ENCODE measurements at regions of chr15 and their contacts with region 1.

Region 1: DNA sequence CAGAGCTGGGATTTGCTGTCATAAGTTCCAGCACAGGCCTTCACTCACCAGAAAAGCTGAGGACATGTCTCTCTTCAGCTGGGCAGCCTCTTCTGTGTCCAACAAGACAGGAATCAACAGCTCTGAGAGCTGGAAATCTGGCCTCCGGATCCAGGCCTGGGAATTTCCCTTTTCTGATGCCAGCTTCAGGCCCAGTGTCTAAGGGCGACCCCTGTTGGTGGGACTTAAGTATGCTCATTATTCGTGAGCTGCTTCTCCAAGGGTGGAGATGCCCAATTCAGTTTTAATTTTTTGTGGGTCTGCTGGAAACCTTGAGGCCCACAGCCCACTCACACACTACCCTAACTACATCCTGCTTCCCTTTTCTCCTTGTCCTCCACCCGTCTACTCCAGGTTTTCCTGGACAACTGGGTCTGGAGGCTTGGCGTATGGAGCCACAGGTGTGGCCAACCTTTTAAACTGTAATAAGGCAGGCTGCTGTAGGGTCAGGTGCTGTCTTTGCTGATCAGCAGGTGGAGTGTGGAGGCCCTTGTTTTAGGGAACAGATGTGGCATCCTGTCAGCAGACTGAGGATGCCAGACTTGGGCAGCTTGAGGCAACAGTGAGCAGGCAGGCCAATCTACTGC is 2.6 kb upstream of the CEMIP start:
- DNase-seq: peak; percentile 81
- H3K4me3 ChIP-seq: no peak overlapping the region
- H3K27ac ChIP-seq: no peak overlapping the region
- H3K4me1 ChIP-seq: peaks cover 18% of the 10 kb centered on the region
- H3K27me3 ChIP-seq: peaks cover 13 to 17% of the 10 kb centered on the region in 2 experiments
- CTCF ChIP-seq: peak; percentile 88
- POLR2A ChIP-seq: no peak

Region 2: GRCh38 chr15:80475572-80475971 is 301.0 kb before region 1 on chr15:
- CTCF ChIA-PET with region 1: interaction called, 14 read pairs
- POLR2A ChIA-PET with region 1: no interaction called
- dilution Hi-C with region 1: no loop called
- intact Hi-C with region 1: no loop called
- DNase-seq: no peak
- H3K4me3 ChIP-seq: no peak overlapping the region
- H3K27ac ChIP-seq: no peak overlapping the region
- H3K4me1 ChIP-seq: no peaks in the 10 kb centered on the region
- H3K27me3 ChIP-seq: no peaks in the 10 kb centered on the region
- CTCF ChIP-seq: peak in 1 of 2 donors; percentile 1
- POLR2A ChIP-seq: no peak

Region 3: GRCh38 chr15:80507712-80508316 is 268.7 kb before region 1 on chr15:
- CTCF ChIA-PET with region 1: no interaction called
- POLR2A ChIA-PET with region 1: no interaction called
- dilution Hi-C with region 1: no loop called
- intact Hi-C with region 1: no loop called
- DNase-seq: no peak
- H3K4me3 ChIP-seq: no peak overlapping the region
- H3K27ac ChIP-seq: no peak overlapping the region
- H3K4me1 ChIP-seq: no peaks in the 10 kb centered on the region
- H3K27me3 ChIP-seq: no peaks in the 10 kb centered on the region
- CTCF ChIP-seq: no peak
- POLR2A ChIP-seq: no peak

Region 4: GRCh38 chr15:80580106-80580505 is 196.4 kb before region 1 on chr15:
- CTCF ChIA-PET with region 1: interaction called, 13 read pairs
- POLR2A ChIA-PET with region 1: no interaction called
- dilution Hi-C with region 1: no loop called
- intact Hi-C with region 1: loop called (anchors 5 kb)
- DNase-seq: no peak
- H3K4me3 ChIP-seq: no peak overlapping the region
- H3K27ac ChIP-seq: no peak overlapping the region
- H3K4me1 ChIP-seq: no peaks in the 10 kb centered on the region
- H3K27me3 ChIP-seq: no peaks in the 10 kb centered on the region
- CTCF ChIP-seq: no peak
- POLR2A ChIP-seq: no peak

Region 5: DNA sequence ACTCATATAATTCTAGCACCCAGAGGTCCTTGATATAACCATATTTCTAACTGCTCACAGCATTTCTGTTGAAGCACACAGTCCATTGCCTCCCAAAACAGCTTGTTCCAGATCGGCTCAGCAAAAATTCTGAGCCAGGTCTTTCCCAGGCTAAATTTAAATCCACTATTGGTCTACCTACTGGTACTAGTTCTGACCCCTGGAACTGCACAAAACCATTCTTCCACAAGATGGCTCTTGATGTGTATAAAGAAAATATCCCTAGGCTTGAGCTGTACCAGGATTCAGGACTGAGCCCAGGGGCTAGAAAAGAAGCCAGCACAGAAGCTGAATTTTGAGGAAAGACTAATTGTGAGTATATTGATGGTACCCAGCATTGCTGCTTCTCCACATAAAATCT is 156.9 kb before region 1 on chr15:
- CTCF ChIA-PET with region 1: interaction called, 56 read pairs
- POLR2A ChIA-PET with region 1: no interaction called
- dilution Hi-C with region 1: no loop called
- intact Hi-C with region 1: loop called (anchors 1 kb)
- DNase-seq: no peak
- H3K4me3 ChIP-seq: no peak overlapping the region
- H3K27ac ChIP-seq: no peak overlapping the region
- H3K4me1 ChIP-seq: peaks cover 19% of the 10 kb centered on the region
- H3K27me3 ChIP-seq: no peaks in the 10 kb centered on the region
- CTCF ChIP-seq: no peak
- POLR2A ChIP-seq: no peak

Region 6: DNA sequence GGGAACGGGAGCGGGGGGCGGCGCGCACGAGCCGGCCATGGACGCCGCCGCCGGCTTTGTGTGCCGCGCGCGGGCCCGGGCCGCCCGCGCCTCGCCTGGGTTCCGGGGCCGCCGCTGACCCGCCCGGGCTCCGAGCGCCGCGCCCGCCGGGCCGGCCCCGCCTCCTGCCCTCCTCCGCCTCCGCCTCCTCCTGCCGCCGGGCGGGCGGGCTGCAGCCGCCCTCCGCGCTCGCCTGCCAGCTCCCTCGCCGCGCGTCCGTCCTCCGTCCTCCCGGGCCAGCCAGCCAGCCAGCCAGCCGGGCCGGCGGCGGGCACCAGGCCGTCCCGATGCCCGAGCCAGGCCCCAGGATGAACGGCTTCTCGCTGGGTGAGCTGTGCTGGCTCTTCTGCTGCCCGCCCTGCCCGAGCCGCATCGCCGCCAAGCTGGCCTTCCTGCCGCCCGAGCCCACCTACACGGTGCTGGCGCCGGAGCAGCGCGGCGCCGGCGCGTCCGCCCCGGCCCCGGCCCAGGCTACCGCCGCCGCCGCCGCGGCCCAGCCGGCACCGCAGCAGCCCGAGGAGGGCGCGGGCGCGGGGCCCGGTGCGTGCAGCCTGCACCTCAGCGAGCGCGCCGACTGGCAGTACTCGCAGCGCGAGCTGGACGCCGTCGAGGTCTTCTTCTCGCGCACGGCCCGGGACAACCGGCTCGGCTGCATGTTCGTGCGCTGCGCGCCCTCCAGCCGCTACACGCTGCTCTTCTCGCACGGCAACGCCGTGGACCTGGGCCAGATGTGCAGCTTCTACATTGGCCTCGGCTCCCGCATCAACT is 81.2 kb before region 1 on chr15 and contains the start of gene ABHD17C:
- CTCF ChIA-PET with region 1: interaction called, 125 read pairs
- POLR2A ChIA-PET with region 1: no interaction called
- dilution Hi-C with region 1: no loop called
- intact Hi-C with region 1: loop called (anchors 1 kb)
- DNase-seq: peak; percentile 51
- H3K4me3 ChIP-seq: peak within 1 kb of the TSS; percentile 80 to 96 (median 85)
- H3K27ac ChIP-seq: peak within 1 kb of the TSS; percentile 60
- H3K4me1 ChIP-seq: peaks cover 16% of the 10 kb centered on the region
- H3K27me3 ChIP-seq: no peaks in the 10 kb centered on the region
- CTCF ChIP-seq: no peak
- POLR2A ChIP-seq: peak; percentile 64
- total RNA-seq, gene ABHD17C: 8.2 and 10.9 TPM in 2 replicates

Region 7: GRCh38 chr15:80766275-80766674 is 10.3 kb before region 1 on chr15:
- CTCF ChIA-PET with region 1: interaction called, 45 read pairs
- POLR2A ChIA-PET with region 1: no interaction called
- dilution Hi-C with region 1: no loop called
- intact Hi-C with region 1: no loop called
- DNase-seq: no peak
- H3K4me3 ChIP-seq: no peak overlapping the region
- H3K27ac ChIP-seq: no peak overlapping the region
- H3K4me1 ChIP-seq: no peaks in the 10 kb centered on the region
- H3K27me3 ChIP-seq: no peaks in the 10 kb centered on the region
- CTCF ChIP-seq: no peak
- POLR2A ChIP-seq: no peak

Region 8: DNA sequence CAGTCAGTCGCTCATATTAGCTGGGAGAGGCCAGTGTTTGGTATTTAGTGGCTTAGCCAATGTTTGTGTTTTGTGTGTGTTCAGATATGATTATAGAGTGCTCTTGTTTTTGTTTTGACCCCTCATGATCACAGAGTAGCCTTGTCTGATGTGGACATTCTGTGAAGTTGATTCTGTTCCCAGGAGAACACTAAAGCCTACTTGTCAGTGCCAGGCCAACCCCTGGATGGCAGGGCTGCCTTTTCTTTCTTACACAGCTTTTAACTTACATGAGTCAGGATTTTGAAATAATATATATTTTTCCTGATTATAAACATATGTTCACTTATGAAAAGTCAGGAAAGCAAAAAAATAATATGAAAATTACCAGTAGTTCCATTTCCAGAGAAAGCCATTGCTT is 369.5 kb after region 1 on chr15:
- CTCF ChIA-PET with region 1: no interaction called
- POLR2A ChIA-PET with region 1: no interaction called
- dilution Hi-C with region 1: no loop called
- intact Hi-C with region 1: no loop called
- DNase-seq: no peak
- H3K4me3 ChIP-seq: no peak overlapping the region
- H3K27ac ChIP-seq: no peak overlapping the region
- H3K4me1 ChIP-seq: no peaks in the 10 kb centered on the region
- H3K27me3 ChIP-seq: no peaks in the 10 kb centered on the region
- CTCF ChIP-seq: no peak
- POLR2A ChIP-seq: no peak